H1 (cell line): ENCODE measurements at regions of chr18 and their contacts with region 1.

Region 1: GRCh38 chr18:58882044-58882443 is 17.4 kb downstream of the ZNF532 start:
- DNase-seq: no peak
- H3K4me3 ChIP-seq: no peak overlapping the region
- H3K27ac ChIP-seq: no peak overlapping the region
- H3K4me1 ChIP-seq: peaks cover 0 to 8% (median 1%) of the 10 kb centered on the region in 4 experiments; a peak in 2 of 7 replicates
- H3K27me3 ChIP-seq: no peaks in the 10 kb centered on the region
- CTCF ChIP-seq: no peak
- EP300 ChIP-seq: no peak
- POLR2A ChIP-seq: no peak
- RAD21 ChIP-seq: no peak

Region 2: DNA sequence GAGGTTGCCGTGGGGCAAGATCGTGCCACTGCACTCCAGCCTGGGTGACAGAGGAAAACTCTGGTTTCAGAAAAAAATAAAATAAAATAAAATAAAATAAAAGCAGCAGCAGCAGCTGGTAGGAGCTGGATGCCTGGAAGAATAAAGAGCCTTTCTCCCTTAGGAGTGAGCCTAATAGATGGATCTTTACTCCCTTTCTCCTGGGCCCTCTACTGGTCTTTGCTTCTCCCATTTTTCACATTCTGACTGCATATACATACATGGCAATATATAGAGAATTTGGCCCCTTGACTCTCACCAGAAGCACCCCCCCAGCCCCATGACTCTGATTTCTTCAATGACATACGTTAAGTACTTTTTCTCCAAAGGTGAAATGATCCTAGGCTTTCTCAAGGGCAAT is 220.6 kb before region 1 on chr18:
- CTCF ChIA-PET with region 1: no interaction called
- POLR2A ChIA-PET with region 1: no interaction called
- DNase-seq: peak in 1 of 2 experiments; percentile 37
- H3K4me3 ChIP-seq: no peak overlapping the region
- H3K27ac ChIP-seq: no peak overlapping the region
- H3K4me1 ChIP-seq: no peaks in the 10 kb centered on the region
- H3K27me3 ChIP-seq: no peaks in the 10 kb centered on the region
- CTCF ChIP-seq: peak in 2 of 3 experiments; percentile 25 to 35; a peak in 2 of 4 replicates
- EP300 ChIP-seq: no peak
- POLR2A ChIP-seq: no peak
- RAD21 ChIP-seq: peak; percentile 11 to 44; a peak in 3 of 4 replicates

Region 3: DNA sequence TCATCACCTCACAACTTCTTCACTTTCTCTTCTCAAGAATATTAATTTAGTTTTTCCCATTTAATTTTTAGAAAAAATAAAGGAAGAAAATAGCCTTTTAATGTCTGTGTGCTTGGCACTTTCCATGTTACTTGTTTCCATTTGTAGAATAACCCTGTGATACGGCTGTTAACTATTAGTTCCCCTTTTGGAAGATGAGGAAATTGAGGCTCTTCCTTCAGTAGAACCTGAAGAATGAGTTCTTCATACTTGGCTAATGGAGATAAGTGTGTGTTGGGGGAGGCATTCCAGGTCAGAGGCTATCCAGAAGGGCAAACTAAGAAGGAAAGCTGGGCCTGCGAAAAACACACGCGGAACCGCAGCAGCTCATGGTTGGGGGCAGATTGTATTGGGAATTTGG is 20.9 kb after region 1 on chr18:
- CTCF ChIA-PET with region 1: interaction called, 3 read pairs
- POLR2A ChIA-PET with region 1: interaction called, 75 read pairs
- DNase-seq: no peak
- H3K4me3 ChIP-seq: no peak overlapping the region
- H3K27ac ChIP-seq: no peak overlapping the region
- H3K4me1 ChIP-seq: peaks cover 5 to 9% (median 6%) of the 10 kb centered on the region in 4 experiments; a peak in 6 of 7 replicates
- H3K27me3 ChIP-seq: no peaks in the 10 kb centered on the region
- CTCF ChIP-seq: no peak
- EP300 ChIP-seq: no peak
- POLR2A ChIP-seq: no peak
- RAD21 ChIP-seq: no peak